PC-9 (cell line): ENCODE measurements at regions of chr19 and their contacts with region 1.

Region 1: GRCh38 chr19:14419106-14419813 is at the start of gene DDX39A:
- DNase-seq: peak; percentile 96 to 99
- H3K4me3 ChIP-seq: peak within 1 kb of the TSS; percentile 68
- H3K27ac ChIP-seq: peak within 1 kb of the TSS; percentile 69
- H3K4me1 ChIP-seq: peaks cover 23% of the 10 kb centered on the region
- H3K27me3 ChIP-seq: no peaks in the 10 kb centered on the region
- CTCF ChIP-seq: no peak
- total RNA-seq, gene DDX39A: 66.5 and 67.4 TPM in 2 replicates

Region 2: GRCh38 chr19:13764101-13764807 is 655.0 kb before region 1 on chr19 and contains the start of gene MRI1:
- CTCF ChIA-PET with region 1: no interaction called
- POLR2A ChIA-PET with region 1: no interaction called
- intact Hi-C with region 1: no loop called
- DNase-seq: peak in 1 of 2 experiments; percentile 72
- H3K4me3 ChIP-seq: peak within 1 kb of the TSS; percentile 61
- H3K27ac ChIP-seq: peak within 1 kb of the TSS; percentile 35; the same call in 1 of the 2 replicates
- H3K4me1 ChIP-seq: peaks cover 9% of the 10 kb centered on the region; the same call in 1 of the 2 replicates
- H3K27me3 ChIP-seq: no peaks in the 10 kb centered on the region
- CTCF ChIP-seq: no peak
- total RNA-seq, gene MRI1: 30.1 and 33.8 TPM in 2 replicates

Region 3: GRCh38 chr19:14023404-14024235 is 395.6 kb before region 1 on chr19:
- CTCF ChIA-PET with region 1: no interaction called
- POLR2A ChIA-PET with region 1: interaction called, 10 read pairs
- intact Hi-C with region 1: no loop called
- DNase-seq: peak; percentile 56 to 68
- H3K4me3 ChIP-seq: no peak overlapping the region
- H3K27ac ChIP-seq: peak overlapping the region; percentile 93
- H3K4me1 ChIP-seq: peaks cover 31% of the 10 kb centered on the region
- H3K27me3 ChIP-seq: no peaks in the 10 kb centered on the region
- CTCF ChIP-seq: peak; percentile 76

Region 4: GRCh38 chr19:14081325-14082093 is 337.8 kb before region 1 on chr19:
- CTCF ChIA-PET with region 1: no interaction called
- POLR2A ChIA-PET with region 1: no interaction called
- intact Hi-C with region 1: loop called (anchors 2 kb)
- DNase-seq: peak; percentile 99
- H3K4me3 ChIP-seq: peak overlapping the region; percentile 85
- H3K27ac ChIP-seq: peak overlapping the region; percentile 71
- H3K4me1 ChIP-seq: peaks cover 16% of the 10 kb centered on the region
- H3K27me3 ChIP-seq: no peaks in the 10 kb centered on the region
- CTCF ChIP-seq: peak; percentile 17; the same call in 1 of the 2 replicates

Region 5: DNA sequence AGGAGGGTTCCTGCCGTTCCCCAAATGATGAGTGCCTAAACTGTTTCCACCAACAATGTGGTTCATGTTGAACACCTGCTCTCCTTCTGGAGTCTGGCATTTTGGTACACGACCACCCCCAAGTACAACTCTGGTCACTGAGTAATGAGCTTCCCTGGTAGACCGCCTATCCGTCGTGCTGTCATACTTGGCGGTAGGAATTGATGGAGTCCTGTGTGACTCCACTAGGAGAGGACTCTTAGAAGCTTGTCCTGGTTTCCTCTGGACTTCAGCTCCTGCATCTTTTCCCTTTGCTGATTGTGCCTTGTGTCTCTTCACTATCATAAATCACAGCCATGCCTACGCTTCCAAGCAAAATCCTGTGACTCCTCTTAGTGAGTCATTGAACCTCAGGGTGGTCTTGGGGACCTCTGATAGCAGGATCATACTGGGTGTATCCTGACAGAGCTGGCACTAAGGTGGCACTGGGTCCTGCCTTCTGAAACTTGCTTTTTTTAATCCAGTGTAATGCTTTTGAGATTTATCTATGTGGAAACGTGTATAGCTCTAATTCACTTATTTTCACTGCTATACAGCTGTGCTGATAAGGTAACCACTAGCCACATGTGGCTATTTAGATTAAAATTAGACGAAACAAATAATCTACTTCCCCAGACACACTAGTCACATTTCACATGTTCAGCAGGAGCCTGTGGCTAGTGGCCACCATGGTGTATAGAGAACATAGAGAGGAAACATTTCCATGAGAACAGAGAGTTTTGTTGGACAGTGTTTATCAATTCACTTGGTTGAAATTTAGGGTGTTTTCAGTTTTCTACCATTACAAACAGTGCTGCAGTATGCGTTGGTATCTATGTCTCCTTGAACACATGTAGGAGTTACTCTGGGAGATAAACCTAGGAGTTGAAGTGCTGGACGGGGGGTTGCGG is 276.7 kb before region 1 on chr19:
- CTCF ChIA-PET with region 1: no interaction called
- POLR2A ChIA-PET with region 1: no interaction called
- intact Hi-C with region 1: no loop called
- DNase-seq: no peak
- H3K4me3 ChIP-seq: no peak overlapping the region
- H3K27ac ChIP-seq: no peak overlapping the region
- H3K4me1 ChIP-seq: peaks cover 23% of the 10 kb centered on the region
- H3K27me3 ChIP-seq: no peaks in the 10 kb centered on the region
- CTCF ChIP-seq: no peak

Region 6: GRCh38 chr19:14198384-14199376 is 220.6 kb before region 1 on chr19:
- CTCF ChIA-PET with region 1: interaction called, 14 read pairs
- POLR2A ChIA-PET with region 1: no interaction called
- intact Hi-C with region 1: no loop called
- DNase-seq: no peak
- H3K4me3 ChIP-seq: no peak overlapping the region
- H3K27ac ChIP-seq: no peak overlapping the region
- H3K4me1 ChIP-seq: no peaks in the 10 kb centered on the region
- H3K27me3 ChIP-seq: no peaks in the 10 kb centered on the region
- CTCF ChIP-seq: peak; percentile 19; the same call in 1 of the 2 replicates

Region 7: GRCh38 chr19:14337510-14337909 is 81.8 kb before region 1 on chr19:
- CTCF ChIA-PET with region 1: no interaction called
- POLR2A ChIA-PET with region 1: no interaction called
- intact Hi-C with region 1: no loop called
- DNase-seq: no peak
- H3K4me3 ChIP-seq: no peak overlapping the region
- H3K27ac ChIP-seq: no peak overlapping the region
- H3K4me1 ChIP-seq: peaks cover 11% of the 10 kb centered on the region
- H3K27me3 ChIP-seq: no peaks in the 10 kb centered on the region
- CTCF ChIP-seq: no peak

Region 8: DNA sequence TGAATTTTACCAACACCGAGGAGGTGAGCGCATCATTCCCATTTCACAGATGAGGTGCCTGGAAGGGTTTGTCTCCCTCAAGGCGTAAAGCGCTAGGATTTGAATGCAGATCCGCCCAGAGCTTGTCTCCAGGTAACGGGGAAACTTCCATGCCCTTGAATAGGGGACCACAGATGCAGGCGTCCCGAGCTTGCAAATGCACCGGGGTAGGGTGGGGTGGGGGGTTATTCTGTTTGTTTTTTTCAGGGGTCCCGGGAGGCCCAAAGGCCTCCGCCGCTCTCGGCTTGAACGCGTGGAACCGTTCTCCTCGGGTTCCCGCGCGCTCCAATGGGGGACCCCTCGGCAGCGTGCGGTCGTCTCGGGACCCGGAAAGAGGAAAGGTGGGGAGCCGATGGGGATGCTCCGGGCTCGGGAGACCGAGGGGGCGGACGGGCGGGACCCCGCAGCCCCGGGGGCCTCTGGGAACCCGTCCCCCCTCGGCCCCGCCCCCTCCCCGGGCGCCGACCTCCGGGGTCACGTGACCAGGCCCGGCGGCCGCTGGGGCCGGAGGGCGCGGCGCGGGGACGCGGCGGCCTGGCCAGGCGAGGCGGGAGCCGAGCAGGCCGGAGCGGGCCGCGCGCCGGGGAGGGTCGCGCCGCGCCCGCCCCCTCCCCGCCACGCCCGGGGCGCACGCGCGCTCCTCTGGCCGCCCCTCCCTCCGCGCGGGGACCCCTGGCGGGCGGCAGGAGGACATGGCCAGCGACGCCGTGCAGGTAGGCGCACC is 13.7 kb after region 1 on chr19 and contains the start of gene PKN1:
- CTCF ChIA-PET with region 1: no interaction called
- POLR2A ChIA-PET with region 1: no interaction called
- intact Hi-C with region 1: loop called (anchors 1 kb)
- DNase-seq: peak; percentile 38 to 66
- H3K4me3 ChIP-seq: peak within 1 kb of the TSS; percentile 93
- H3K27ac ChIP-seq: peak within 1 kb of the TSS; percentile 51
- H3K4me1 ChIP-seq: peaks cover 24% of the 10 kb centered on the region
- H3K27me3 ChIP-seq: no peaks in the 10 kb centered on the region; the same call in 1 of the 2 replicates
- CTCF ChIP-seq: no peak
- total RNA-seq, gene PKN1: 257 and 417 TPM in 2 replicates

Region 9: DNA sequence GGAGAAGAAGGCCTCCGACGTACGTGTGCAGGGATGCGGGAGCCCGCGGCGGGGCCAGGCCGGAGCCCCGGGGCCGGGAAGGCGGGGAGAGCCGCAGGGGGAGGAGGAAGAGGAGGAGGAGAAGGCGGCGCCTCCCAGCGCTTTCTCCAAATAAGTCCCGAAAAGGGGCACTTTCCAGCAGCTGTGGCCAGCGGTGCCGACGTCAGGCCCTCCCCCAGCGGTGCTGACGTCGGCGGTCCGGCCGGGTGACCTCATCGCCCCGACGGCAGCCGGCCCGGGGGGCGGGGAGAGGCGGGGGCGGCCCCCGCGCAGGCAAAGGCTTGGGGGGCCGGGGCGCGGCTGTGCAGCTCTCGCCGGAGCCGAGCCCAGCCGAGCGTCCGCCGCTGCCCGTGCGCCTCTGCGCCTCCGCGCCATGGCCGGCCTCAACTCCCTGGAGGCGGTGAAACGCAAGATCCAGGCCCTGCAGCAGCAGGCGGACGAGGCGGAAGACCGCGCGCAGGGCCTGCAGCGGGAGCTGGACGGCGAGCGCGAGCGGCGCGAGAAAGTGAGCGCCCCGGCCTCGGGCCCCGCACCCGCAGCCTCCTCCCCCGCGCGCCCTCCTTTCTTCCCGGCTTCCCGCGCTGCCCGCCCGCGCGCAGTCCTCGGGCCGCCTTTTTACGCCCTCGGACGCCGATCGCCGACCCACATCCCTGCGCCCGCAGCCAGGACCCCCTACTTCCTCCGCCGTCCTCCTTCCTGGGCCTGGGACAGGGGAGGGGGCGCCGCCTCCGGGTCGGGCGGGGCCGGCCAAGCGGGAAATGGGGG is 1657.1 kb after region 1 on chr19 and contains the start of gene TPM4:
- CTCF ChIA-PET with region 1: no interaction called
- POLR2A ChIA-PET with region 1: interaction called, 12 read pairs
- intact Hi-C with region 1: no loop called
- DNase-seq: peak; percentile 77 to 92
- H3K4me3 ChIP-seq: peak within 1 kb of the TSS; percentile 70
- H3K27ac ChIP-seq: peak within 1 kb of the TSS; percentile 99
- H3K4me1 ChIP-seq: peaks cover 43% of the 10 kb centered on the region
- H3K27me3 ChIP-seq: no peaks in the 10 kb centered on the region
- CTCF ChIP-seq: no peak
- total RNA-seq, gene TPM4: 279 and 307 TPM in 2 replicates